Endothelial cell of umbilical vein (primary cell): ENCODE measurements at regions of chr18 and their contacts with region 1.

Region 1: DNA sequence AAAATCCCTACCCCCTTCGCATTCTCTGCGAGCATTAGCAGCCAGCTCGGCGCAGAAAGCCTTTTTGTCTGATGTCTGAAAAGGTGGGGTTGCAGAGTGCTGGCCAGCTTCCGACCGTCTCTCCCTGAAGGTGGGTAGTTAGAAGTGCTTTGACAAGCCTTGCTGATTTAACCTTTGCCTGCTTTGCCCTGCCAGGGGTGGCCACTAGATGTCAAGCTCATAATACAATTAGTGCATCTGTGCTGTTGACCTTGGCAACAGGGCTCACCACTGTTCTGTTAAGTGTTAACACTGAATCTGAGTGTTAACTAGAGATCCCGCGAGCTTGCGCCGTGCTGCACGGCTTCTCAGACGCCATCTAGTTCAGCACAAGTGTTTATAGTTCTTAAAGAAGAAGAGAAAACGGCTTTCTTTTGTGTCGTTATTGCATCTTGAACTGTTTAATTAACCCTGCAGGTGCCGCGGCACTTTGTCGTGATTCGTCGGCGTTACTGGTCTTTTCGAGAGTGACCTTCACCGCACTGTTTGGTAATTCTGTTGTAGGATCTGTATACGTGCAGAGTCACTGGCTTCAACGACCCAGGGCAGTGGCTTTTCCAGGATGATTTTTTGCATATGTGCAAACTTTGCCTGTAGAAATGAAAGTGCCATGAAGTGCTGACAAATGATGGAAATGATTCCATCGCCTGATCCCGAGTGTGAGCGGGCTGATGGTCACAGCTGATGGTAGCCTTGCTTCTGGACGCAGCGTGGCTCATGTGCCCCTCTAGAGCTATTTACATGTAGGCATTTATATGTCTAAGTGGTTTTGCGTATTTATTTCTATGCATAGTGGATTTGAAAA is 5.5 kb downstream of the SALL3 start:
- DNase-seq: no peak
- H3K4me3 ChIP-seq: no peak overlapping the region
- H3K27ac ChIP-seq: no peak overlapping the region
- H3K4me1 ChIP-seq: no peaks in the 10 kb centered on the region
- H3K27me3 ChIP-seq: peaks cover 42 to 75% of the 10 kb centered on the region in 2 experiments
- CTCF ChIP-seq: no peak
- POLR2A ChIP-seq: no peak

Region 2: GRCh38 chr18:77899972-77900754 is 1085.0 kb before region 1 on chr18:
- CTCF ChIA-PET with region 1: interaction called, 3 read pairs
- POLR2A ChIA-PET with region 1: no interaction called
- dilution Hi-C with region 1: no loop called
- intact Hi-C with region 1: loop called (anchors 5 kb)
- DNase-seq: no peak
- H3K4me3 ChIP-seq: no peak overlapping the region
- H3K27ac ChIP-seq: no peak overlapping the region
- H3K4me1 ChIP-seq: no peaks in the 10 kb centered on the region
- H3K27me3 ChIP-seq: no peaks in the 10 kb centered on the region
- CTCF ChIP-seq: peak; percentile 75 to 79
- POLR2A ChIP-seq: no peak

Region 3: DNA sequence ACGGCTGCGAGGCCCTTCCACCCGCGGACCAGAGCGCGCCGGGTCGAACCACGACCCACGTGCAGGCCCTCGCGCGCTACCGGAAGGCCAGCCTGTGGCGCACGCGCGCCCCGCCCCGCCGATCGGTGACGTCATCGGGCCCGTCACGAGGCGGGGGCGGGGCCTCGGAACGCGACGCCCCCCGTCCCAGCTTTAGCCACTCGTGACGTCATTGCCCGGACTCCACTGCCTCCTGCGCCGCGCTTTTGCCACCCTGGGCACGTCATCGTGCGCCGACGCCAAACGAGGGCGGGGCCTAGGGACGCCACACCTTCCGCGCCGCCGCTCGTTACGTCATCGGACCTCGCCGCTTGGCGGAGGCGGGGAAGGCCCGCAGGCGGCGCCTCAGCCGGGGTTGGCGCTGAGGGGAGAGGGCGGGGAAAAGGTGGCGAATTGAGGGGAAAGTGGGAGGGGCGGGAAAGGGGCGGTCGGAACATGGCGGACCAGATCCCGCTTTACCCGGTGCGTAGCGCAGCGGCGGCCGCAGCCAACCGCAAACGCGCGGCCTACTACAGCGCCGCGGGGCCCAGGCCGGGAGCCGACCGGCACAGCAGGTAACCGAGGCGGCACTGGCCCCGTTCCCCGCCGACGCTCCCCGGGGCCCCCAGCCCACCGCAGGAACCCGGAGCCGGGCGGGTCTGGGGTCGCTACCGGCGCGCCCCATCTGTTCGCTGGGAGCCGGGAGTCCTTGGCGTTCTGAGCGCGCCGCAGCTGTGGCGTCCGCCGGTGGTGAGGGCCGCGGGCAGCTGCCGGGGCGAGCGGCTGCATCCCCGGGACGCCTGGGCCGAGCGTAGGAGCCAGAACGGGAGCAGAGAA is 84.0 kb after region 1 on chr18 and contains the start of gene ATP9B:
- CTCF ChIA-PET with region 1: no interaction called
- POLR2A ChIA-PET with region 1: no interaction called
- dilution Hi-C with region 1: no loop called
- intact Hi-C with region 1: loop called (anchors 10 kb)
- DNase-seq: peak; percentile 99
- H3K4me3 ChIP-seq: peak within 1 kb of the TSS; percentile 51 to 97 (median 80)
- H3K27ac ChIP-seq: peak within 1 kb of the TSS; percentile 54
- H3K4me1 ChIP-seq: peaks cover 16% of the 10 kb centered on the region
- H3K27me3 ChIP-seq: no peaks in the 10 kb centered on the region
- CTCF ChIP-seq: peak in 1 of 2 donors; percentile 4
- POLR2A ChIP-seq: peak; percentile 75
- total RNA-seq, gene ATP9B: 18.2 and 21.1 TPM in 2 replicates

Region 4: DNA sequence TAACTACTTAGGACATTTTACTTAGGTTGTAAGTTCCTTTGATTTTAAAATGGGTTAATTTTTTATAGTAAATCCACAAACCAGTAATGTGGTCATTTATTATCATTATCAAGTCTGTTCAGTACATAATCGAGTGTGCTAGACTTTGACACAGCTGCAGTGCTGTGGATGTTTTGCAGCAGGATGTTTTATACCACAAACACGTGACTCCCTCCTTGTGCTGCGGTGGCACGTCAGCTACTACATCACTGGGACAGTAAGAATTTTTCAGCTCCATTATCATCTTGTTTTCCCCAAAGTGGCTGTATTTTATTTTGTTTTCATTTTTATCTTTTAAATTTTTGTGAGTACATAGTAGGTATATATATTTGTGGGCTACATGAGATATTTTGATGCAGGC is 154.0 kb after region 1 on chr18:
- CTCF ChIA-PET with region 1: no interaction called
- POLR2A ChIA-PET with region 1: no interaction called
- dilution Hi-C with region 1: no loop called
- intact Hi-C with region 1: no loop called
- DNase-seq: no peak
- H3K4me3 ChIP-seq: no peak overlapping the region
- H3K27ac ChIP-seq: no peak overlapping the region
- H3K4me1 ChIP-seq: no peaks in the 10 kb centered on the region
- H3K27me3 ChIP-seq: no peaks in the 10 kb centered on the region
- CTCF ChIP-seq: no peak
- POLR2A ChIP-seq: no peak

Region 5: GRCh38 chr18:79246348-79247108 is 261.4 kb after region 1 on chr18:
- CTCF ChIA-PET with region 1: no interaction called
- POLR2A ChIA-PET with region 1: no interaction called
- dilution Hi-C with region 1: no loop called
- intact Hi-C with region 1: loop called (anchors 5 kb)
- DNase-seq: peak; percentile 88
- H3K4me3 ChIP-seq: peak overlapping the region in 2 of 3 experiments; percentile 29 to 31
- H3K27ac ChIP-seq: peak overlapping the region; percentile 13
- H3K4me1 ChIP-seq: no peaks in the 10 kb centered on the region
- H3K27me3 ChIP-seq: no peaks in the 10 kb centered on the region
- CTCF ChIP-seq: peak; percentile 96 to 99
- POLR2A ChIP-seq: no peak